ENCODE measurements at regions of chr13 and their contacts with region 1.

Region 1: DNA sequence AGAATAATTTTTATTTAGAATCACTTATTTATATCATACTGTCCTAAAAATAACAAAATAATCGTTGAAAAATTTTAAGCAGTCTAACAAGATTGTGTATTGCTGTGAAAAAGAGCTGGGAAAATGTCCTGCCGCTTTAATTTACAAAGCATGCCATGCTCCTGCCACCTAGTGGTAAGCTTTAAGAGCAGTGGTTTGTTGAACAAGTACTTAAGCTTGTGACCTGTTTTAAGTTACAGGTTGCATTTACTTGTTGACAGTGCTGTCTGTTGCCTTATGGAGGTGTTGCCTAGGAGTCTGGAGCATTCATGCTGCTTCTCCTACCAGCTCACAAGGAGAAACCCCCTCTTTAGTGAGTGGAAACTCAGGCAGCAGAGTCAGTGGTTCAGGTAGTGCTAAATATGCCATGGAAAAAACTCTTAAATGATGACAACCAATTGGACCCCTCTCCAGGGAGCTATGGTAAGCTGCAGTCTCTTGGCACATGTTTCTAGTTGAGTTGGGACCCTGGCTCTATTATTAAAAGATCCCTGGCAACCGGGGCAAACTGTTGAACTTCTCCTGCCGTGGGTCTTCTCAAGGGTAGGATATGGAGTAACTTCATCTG is 68.4 kb downstream of the SPATA13 start:
- DNase-seq: peak; percentile 28
- H3K4me3 Mint-ChIP-seq: no peak overlapping the region
- H3K27ac Mint-ChIP-seq: no peak overlapping the region
- H3K4me1 Mint-ChIP-seq: no peaks in the 10 kb centered on the region
- H3K27me3 Mint-ChIP-seq: no peaks in the 10 kb centered on the region
- CTCF ChIP-seq: peak; percentile 44

Region 2: GRCh38 chr13:24020375-24020830 is 208.6 kb before region 1 on chr13:
- CTCF ChIA-PET with region 1: interaction called, 13 read pairs
- intact Hi-C with region 1: loop called (anchors 2 kb)
- DNase-seq: peak; percentile 52
- H3K4me3 Mint-ChIP-seq: no peak overlapping the region
- H3K27ac Mint-ChIP-seq: no peak overlapping the region
- H3K4me1 Mint-ChIP-seq: no peaks in the 10 kb centered on the region
- H3K27me3 Mint-ChIP-seq: no peaks in the 10 kb centered on the region
- CTCF ChIP-seq: no peak

Region 3: GRCh38 chr13:24141333-24141910 is 87.5 kb before region 1 on chr13:
- CTCF ChIA-PET with region 1: no interaction called
- intact Hi-C with region 1: no loop called
- DNase-seq: no peak
- H3K4me3 Mint-ChIP-seq: no peak overlapping the region
- H3K27ac Mint-ChIP-seq: peak overlapping the region; percentile 22
- H3K4me1 Mint-ChIP-seq: peaks cover 22% of the 10 kb centered on the region
- H3K27me3 Mint-ChIP-seq: no peaks in the 10 kb centered on the region
- CTCF ChIP-seq: no peak

Measured in Calu3 (cell line).